ENCODE measurements at regions of chr12 and their contacts with region 1.

Region 1: DNA sequence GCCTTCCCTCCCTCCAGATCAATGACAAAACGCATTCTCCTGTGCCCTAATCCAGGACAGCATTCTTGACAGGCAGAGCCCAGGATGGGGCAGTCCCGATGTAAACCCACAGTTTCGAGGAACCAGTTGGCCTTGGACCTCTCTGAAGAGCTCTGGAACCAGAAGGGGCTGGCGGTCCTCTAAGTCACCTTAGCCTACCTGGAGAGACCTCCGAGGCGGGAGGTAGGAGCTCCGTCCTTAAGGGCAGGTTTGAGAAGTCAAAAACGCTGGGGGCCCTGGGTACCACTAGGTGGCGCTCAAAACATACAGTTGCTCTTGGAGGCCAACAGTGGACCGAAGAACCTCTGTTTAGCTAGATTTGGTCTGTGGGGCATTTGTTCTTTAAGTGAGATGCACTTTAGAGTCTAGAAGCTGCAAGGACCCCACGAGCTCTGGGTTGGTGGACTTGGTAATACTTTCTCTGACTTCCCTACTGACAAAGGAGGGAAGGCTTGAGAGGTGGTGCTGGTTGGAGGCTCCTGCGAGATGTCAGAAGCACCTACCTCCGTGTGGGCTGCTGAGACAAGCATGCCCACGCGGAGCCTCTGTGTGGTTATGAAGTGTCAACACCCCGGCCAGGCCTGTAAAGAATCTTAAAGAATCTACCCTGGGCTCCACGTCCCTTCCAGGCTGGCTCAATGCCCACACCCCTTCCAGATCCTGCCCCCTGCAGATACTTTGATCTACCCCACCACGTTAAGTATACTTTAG is 74.8 kb upstream of the CHST11 start:
- DNase-seq: peak; percentile 90
- ATAC-seq: peak; percentile 90
- H3K4me3 ChIP-seq: no peak overlapping the region
- H3K4me3 Mint-ChIP-seq: no peak overlapping the region
- H3K27ac ChIP-seq: no peak overlapping the region
- H3K27ac Mint-ChIP-seq: peak overlapping the region; percentile 1
- H3K4me1 ChIP-seq: peaks cover 3 to 9% of the 10 kb centered on the region in 2 donors
- H3K4me1 Mint-ChIP-seq: peaks cover 9% of the 10 kb centered on the region
- H3K27me3 ChIP-seq: peaks cover 0 to 4% (median 2%) of the 10 kb centered on the region in 4 experiments
- H3K27me3 Mint-ChIP-seq: peaks cover 6% of the 10 kb centered on the region
- CTCF ChIP-seq: peak; percentile 95

Region 2: DNA sequence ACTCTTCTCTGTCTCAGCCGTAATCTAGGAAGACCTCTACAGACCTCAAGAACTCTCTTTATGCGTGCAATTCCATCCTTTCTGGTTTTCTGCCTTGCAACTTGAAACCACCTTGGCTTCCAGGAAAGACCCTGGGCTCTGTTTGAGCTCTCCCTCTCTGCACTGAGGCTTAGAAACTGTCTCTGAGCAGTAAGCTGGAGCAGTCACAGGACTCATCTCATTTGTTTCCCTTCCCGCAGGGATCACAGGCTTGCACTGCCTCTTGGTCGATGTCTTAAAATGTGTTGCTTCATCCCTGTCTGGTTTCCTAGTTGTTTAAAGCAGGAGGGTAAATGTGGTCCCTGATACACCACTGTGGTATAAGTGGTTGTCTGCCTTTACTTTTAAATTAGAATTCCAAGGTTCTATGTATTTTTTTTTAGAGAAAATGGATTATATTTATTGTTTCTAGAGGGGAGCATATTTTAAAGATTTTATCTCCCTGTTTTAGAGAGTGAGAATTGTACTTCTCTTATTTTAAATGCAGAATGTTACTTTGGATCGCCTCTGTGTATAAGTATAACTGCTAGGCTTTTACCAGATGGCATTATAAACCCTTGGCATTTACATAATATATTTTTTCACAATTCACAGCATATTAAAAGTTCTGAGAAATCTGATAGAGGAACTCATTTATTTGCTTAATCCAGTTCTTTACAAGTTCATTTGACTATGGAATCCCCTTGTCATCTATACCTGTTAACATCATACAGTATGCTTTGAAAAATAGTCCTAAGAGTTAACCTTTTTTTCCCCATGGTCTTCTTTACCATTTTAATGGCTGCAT is 52.0 kb before region 1 on chr12:
- CTCF ChIA-PET with region 1: no interaction called
- POLR2A ChIA-PET with region 1: no interaction called
- intact Hi-C with region 1: no loop called
- DNase-seq: no peak
- ATAC-seq: no peak
- H3K4me3 ChIP-seq: no peak overlapping the region
- H3K4me3 Mint-ChIP-seq: no peak overlapping the region
- H3K27ac ChIP-seq: no peak overlapping the region
- H3K27ac Mint-ChIP-seq: no peak overlapping the region
- H3K4me1 ChIP-seq: no peaks in the 10 kb centered on the region
- H3K4me1 Mint-ChIP-seq: no peaks in the 10 kb centered on the region
- H3K27me3 ChIP-seq: no peaks in the 10 kb centered on the region
- H3K27me3 Mint-ChIP-seq: no peaks in the 10 kb centered on the region
- CTCF ChIP-seq: no peak

Region 3: GRCh38 chr12:104473374-104473983 is 91.6 kb after region 1 on chr12:
- CTCF ChIA-PET with region 1: interaction called, 10 read pairs
- POLR2A ChIA-PET with region 1: no interaction called
- intact Hi-C with region 1: no loop called
- DNase-seq: peak; percentile 71
- ATAC-seq: peak; percentile 81
- H3K4me3 ChIP-seq: peak overlapping the region in 4 of 5 experiments; percentile 5 to 49 (median 22)
- H3K4me3 Mint-ChIP-seq: peak overlapping the region; percentile 86
- H3K27ac ChIP-seq: peak overlapping the region; percentile 54 to 88
- H3K27ac Mint-ChIP-seq: peak overlapping the region; percentile 94
- H3K4me1 ChIP-seq: peaks cover 80 to 87% of the 10 kb centered on the region in 2 donors
- H3K4me1 Mint-ChIP-seq: peaks cover 86% of the 10 kb centered on the region
- H3K27me3 ChIP-seq: no peaks in the 10 kb centered on the region
- H3K27me3 Mint-ChIP-seq: no peaks in the 10 kb centered on the region
- CTCF ChIP-seq: no peak

Region 4: GRCh38 chr12:104641862-104642261 is 260.0 kb after region 1 on chr12:
- CTCF ChIA-PET with region 1: interaction called, 33 read pairs
- POLR2A ChIA-PET with region 1: no interaction called
- intact Hi-C with region 1: loop called (anchors 2 kb)
- DNase-seq: peak; percentile 86
- ATAC-seq: peak; percentile 79
- H3K4me3 ChIP-seq: no peak overlapping the region
- H3K4me3 Mint-ChIP-seq: peak overlapping the region; percentile 42
- H3K27ac ChIP-seq: peak overlapping the region; percentile 88 to 96
- H3K27ac Mint-ChIP-seq: peak overlapping the region; percentile 91
- H3K4me1 ChIP-seq: peaks cover 43 to 57% of the 10 kb centered on the region in 2 donors
- H3K4me1 Mint-ChIP-seq: peaks cover 84% of the 10 kb centered on the region
- H3K27me3 ChIP-seq: no peaks in the 10 kb centered on the region
- H3K27me3 Mint-ChIP-seq: no peaks in the 10 kb centered on the region
- CTCF ChIP-seq: peak; percentile 57

Region 5: GRCh38 chr12:104720339-104721038 is 338.6 kb after region 1 on chr12:
- CTCF ChIA-PET with region 1: interaction called, 16 read pairs
- POLR2A ChIA-PET with region 1: interaction called, 3 read pairs
- intact Hi-C with region 1: no loop called
- DNase-seq: peak; percentile 79
- ATAC-seq: peak; percentile 64
- H3K4me3 ChIP-seq: peak overlapping the region; percentile 20 to 52 (median 47)
- H3K4me3 Mint-ChIP-seq: peak overlapping the region; percentile 86
- H3K27ac ChIP-seq: peak overlapping the region; percentile 54 to 73
- H3K27ac Mint-ChIP-seq: peak overlapping the region; percentile 87
- H3K4me1 ChIP-seq: peaks cover 32 to 49% of the 10 kb centered on the region in 2 donors
- H3K4me1 Mint-ChIP-seq: peaks cover 64% of the 10 kb centered on the region
- H3K27me3 ChIP-seq: no peaks in the 10 kb centered on the region
- H3K27me3 Mint-ChIP-seq: no peaks in the 10 kb centered on the region
- CTCF ChIP-seq: no peak

Region 6: GRCh38 chr12:104877123-104877705 is 495.3 kb after region 1 on chr12:
- CTCF ChIA-PET with region 1: interaction called, 77 read pairs
- POLR2A ChIA-PET with region 1: no interaction called
- intact Hi-C with region 1: loop called (anchors 1 kb)
- DNase-seq: peak; percentile 56
- ATAC-seq: no peak
- H3K4me3 ChIP-seq: no peak overlapping the region
- H3K4me3 Mint-ChIP-seq: no peak overlapping the region
- H3K27ac ChIP-seq: no peak overlapping the region
- H3K27ac Mint-ChIP-seq: no peak overlapping the region
- H3K4me1 ChIP-seq: no peaks in the 10 kb centered on the region
- H3K4me1 Mint-ChIP-seq: no peaks in the 10 kb centered on the region
- H3K27me3 ChIP-seq: no peaks in the 10 kb centered on the region
- H3K27me3 Mint-ChIP-seq: no peaks in the 10 kb centered on the region
- CTCF ChIP-seq: peak; percentile 70

Region 7: GRCh38 chr12:105107494-105108371 is 725.8 kb after region 1 on chr12 and contains the start of gene WASHC4:
- CTCF ChIA-PET with region 1: interaction called, 6 read pairs
- POLR2A ChIA-PET with region 1: no interaction called
- intact Hi-C with region 1: loop called (anchors 2 kb)
- DNase-seq: peak; percentile 96
- ATAC-seq: peak; percentile 88
- H3K4me3 ChIP-seq: peak within 1 kb of the TSS; percentile 89 to 99 (median 97)
- H3K4me3 Mint-ChIP-seq: peak within 1 kb of the TSS; percentile 98
- H3K27ac ChIP-seq: peak within 1 kb of the TSS; percentile 93 to 98
- H3K27ac Mint-ChIP-seq: peak within 1 kb of the TSS; percentile 99
- H3K4me1 ChIP-seq: peaks cover 7 to 35% of the 10 kb centered on the region in 2 donors
- H3K4me1 Mint-ChIP-seq: peaks cover 31% of the 10 kb centered on the region
- H3K27me3 ChIP-seq: peaks cover 0 to 9% (median 0%) of the 10 kb centered on the region in 4 experiments
- H3K27me3 Mint-ChIP-seq: peaks cover 8% of the 10 kb centered on the region
- CTCF ChIP-seq: no peak
- total RNA-seq, gene WASHC4: 240 and 247 TPM in 2 replicates

Measured in B cell (primary cell).